CD4-positive, alpha-beta T cell (primary cell): ENCODE measurements at regions of chr1 and their contacts with region 1.

Region 1: GRCh38 chr1:172443626-172444453 is at the start of gene PIGC:
- DNase-seq: peak; percentile 86 to 95 (median 92)
- ATAC-seq: peak; percentile 99
- H3K4me3 ChIP-seq: peak within 1 kb of the TSS; percentile 92
- H3K4me3 Mint-ChIP-seq: peak within 1 kb of the TSS; percentile 98
- H3K27ac ChIP-seq: peak within 1 kb of the TSS; percentile 69 to 79
- H3K27ac Mint-ChIP-seq: peak within 1 kb of the TSS; percentile 90
- H3K4me1 ChIP-seq: peaks cover 17% of the 10 kb centered on the region
- H3K4me1 Mint-ChIP-seq: peaks cover 39% of the 10 kb centered on the region
- H3K27me3 ChIP-seq: no peaks in the 10 kb centered on the region
- H3K27me3 Mint-ChIP-seq: no peaks in the 10 kb centered on the region
- CTCF ChIP-seq: peak; percentile 86
- total RNA-seq, gene PIGC: 23.7 to 27.1 TPM

Region 2: GRCh38 chr1:171781176-171781875 is 662.5 kb before region 1 on chr1 and contains the start of gene METTL13:
- CTCF ChIA-PET with region 1: no interaction called
- POLR2A ChIA-PET with region 1: no interaction called
- intact Hi-C with region 1: loop called in 1 of 2 experiments (anchors 5 kb)
- DNase-seq: peak; percentile 95 to 100 (median 98)
- ATAC-seq: peak; percentile 91
- H3K4me3 ChIP-seq: peak within 1 kb of the TSS; percentile 78
- H3K4me3 Mint-ChIP-seq: peak within 1 kb of the TSS; percentile 99
- H3K27ac ChIP-seq: peak within 1 kb of the TSS; percentile 63 to 75
- H3K27ac Mint-ChIP-seq: peak within 1 kb of the TSS; percentile 90
- H3K4me1 ChIP-seq: peaks cover 46% of the 10 kb centered on the region
- H3K4me1 Mint-ChIP-seq: peaks cover 47% of the 10 kb centered on the region
- H3K27me3 ChIP-seq: no peaks in the 10 kb centered on the region
- H3K27me3 Mint-ChIP-seq: no peaks in the 10 kb centered on the region
- CTCF ChIP-seq: no peak
- total RNA-seq, gene METTL13: 6.5 to 7.9 TPM

Region 3: DNA sequence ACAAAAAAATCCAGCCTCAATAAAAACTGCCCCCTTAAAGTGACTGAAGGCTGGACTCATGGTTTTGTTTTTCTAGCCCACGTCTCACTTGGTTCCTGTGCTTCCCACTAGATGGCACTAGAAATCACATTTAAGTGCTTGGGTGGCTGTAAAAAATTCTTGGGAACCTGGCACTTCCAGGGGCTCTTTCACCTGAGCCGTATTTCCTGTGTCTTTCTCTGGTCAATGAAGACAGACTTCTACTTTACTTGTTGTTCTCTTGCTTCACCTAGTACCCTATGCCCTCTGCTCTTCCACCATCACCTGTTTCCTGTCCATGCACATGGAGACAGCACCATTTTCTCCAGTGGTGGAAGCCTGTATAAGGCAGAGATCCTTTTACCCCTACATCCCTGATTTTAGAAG is 642.4 kb before region 1 on chr1:
- CTCF ChIA-PET with region 1: no interaction called
- POLR2A ChIA-PET with region 1: no interaction called
- intact Hi-C with region 1: loop called (anchors 5 kb)
- DNase-seq: peak in 4 of 14 experiments; percentile 18 to 55 (median 44)
- ATAC-seq: no peak
- H3K4me3 ChIP-seq: no peak overlapping the region
- H3K4me3 Mint-ChIP-seq: no peak overlapping the region
- H3K27ac ChIP-seq: no peak overlapping the region
- H3K27ac Mint-ChIP-seq: no peak overlapping the region
- H3K4me1 ChIP-seq: no peaks in the 10 kb centered on the region
- H3K4me1 Mint-ChIP-seq: peaks cover 6% of the 10 kb centered on the region
- H3K27me3 ChIP-seq: no peaks in the 10 kb centered on the region
- H3K27me3 Mint-ChIP-seq: no peaks in the 10 kb centered on the region
- CTCF ChIP-seq: peak; percentile 64

Region 4: GRCh38 chr1:172002725-172003345 is 441.0 kb before region 1 on chr1:
- CTCF ChIA-PET with region 1: interaction called, 3 read pairs
- POLR2A ChIA-PET with region 1: interaction called, 3 read pairs
- intact Hi-C with region 1: loop called in 1 of 2 experiments (anchors 2 kb)
- DNase-seq: peak in 8 of 14 experiments; percentile 3 to 65 (median 34)
- ATAC-seq: no peak
- H3K4me3 ChIP-seq: no peak overlapping the region
- H3K4me3 Mint-ChIP-seq: no peak overlapping the region
- H3K27ac ChIP-seq: no peak overlapping the region
- H3K27ac Mint-ChIP-seq: no peak overlapping the region
- H3K4me1 ChIP-seq: no peaks in the 10 kb centered on the region
- H3K4me1 Mint-ChIP-seq: no peaks in the 10 kb centered on the region
- H3K27me3 ChIP-seq: no peaks in the 10 kb centered on the region
- H3K27me3 Mint-ChIP-seq: peaks cover under 1% of the 10 kb centered on the region
- CTCF ChIP-seq: peak; percentile 71

Region 5: GRCh38 chr1:172089768-172090510 is 353.9 kb before region 1 on chr1:
- CTCF ChIA-PET with region 1: no interaction called
- POLR2A ChIA-PET with region 1: no interaction called
- intact Hi-C with region 1: loop called (anchors 1 kb)
- DNase-seq: peak; percentile 42 to 78 (median 50)
- ATAC-seq: peak; percentile 96
- H3K4me3 ChIP-seq: no peak overlapping the region
- H3K4me3 Mint-ChIP-seq: no peak overlapping the region
- H3K27ac ChIP-seq: no peak overlapping the region
- H3K27ac Mint-ChIP-seq: no peak overlapping the region
- H3K4me1 ChIP-seq: no peaks in the 10 kb centered on the region
- H3K4me1 Mint-ChIP-seq: no peaks in the 10 kb centered on the region
- H3K27me3 ChIP-seq: no peaks in the 10 kb centered on the region
- H3K27me3 Mint-ChIP-seq: no peaks in the 10 kb centered on the region
- CTCF ChIP-seq: peak; percentile 76

Region 6: GRCh38 chr1:172429331-172430127 is 14.3 kb before region 1 on chr1:
- CTCF ChIA-PET with region 1: interaction called, 7 read pairs
- POLR2A ChIA-PET with region 1: interaction called, 43 read pairs
- intact Hi-C with region 1: loop called (anchors 1 kb)
- DNase-seq: peak in 12 of 14 experiments; percentile 8 to 81 (median 34)
- ATAC-seq: peak; percentile 75
- H3K4me3 ChIP-seq: no peak overlapping the region
- H3K4me3 Mint-ChIP-seq: peak overlapping the region; percentile 64
- H3K27ac ChIP-seq: no peak overlapping the region
- H3K27ac Mint-ChIP-seq: peak overlapping the region; percentile 75
- H3K4me1 ChIP-seq: peaks cover 39% of the 10 kb centered on the region
- H3K4me1 Mint-ChIP-seq: peaks cover 39% of the 10 kb centered on the region
- H3K27me3 ChIP-seq: no peaks in the 10 kb centered on the region
- H3K27me3 Mint-ChIP-seq: no peaks in the 10 kb centered on the region
- CTCF ChIP-seq: peak; percentile 80

Region 7: GRCh38 chr1:173392895-173393658 is 949.2 kb after region 1 on chr1:
- CTCF ChIA-PET with region 1: no interaction called
- POLR2A ChIA-PET with region 1: no interaction called
- intact Hi-C with region 1: no loop called
- DNase-seq: no peak
- ATAC-seq: no peak
- H3K4me3 ChIP-seq: no peak overlapping the region
- H3K4me3 Mint-ChIP-seq: no peak overlapping the region
- H3K27ac ChIP-seq: no peak overlapping the region
- H3K27ac Mint-ChIP-seq: no peak overlapping the region
- H3K4me1 ChIP-seq: no peaks in the 10 kb centered on the region
- H3K4me1 Mint-ChIP-seq: no peaks in the 10 kb centered on the region
- H3K27me3 ChIP-seq: no peaks in the 10 kb centered on the region
- H3K27me3 Mint-ChIP-seq: no peaks in the 10 kb centered on the region
- CTCF ChIP-seq: no peak